Activated CD4-positive, alpha-beta T cell treated with anti-CD3 and anti-CD28 coated beads, Interleukin-2, amount 10 ng/mL, durations not matched to agents 7 days and 5 days (primary cell): ENCODE measurements at regions of chr6 and their contacts with region 1.

Region 1: DNA sequence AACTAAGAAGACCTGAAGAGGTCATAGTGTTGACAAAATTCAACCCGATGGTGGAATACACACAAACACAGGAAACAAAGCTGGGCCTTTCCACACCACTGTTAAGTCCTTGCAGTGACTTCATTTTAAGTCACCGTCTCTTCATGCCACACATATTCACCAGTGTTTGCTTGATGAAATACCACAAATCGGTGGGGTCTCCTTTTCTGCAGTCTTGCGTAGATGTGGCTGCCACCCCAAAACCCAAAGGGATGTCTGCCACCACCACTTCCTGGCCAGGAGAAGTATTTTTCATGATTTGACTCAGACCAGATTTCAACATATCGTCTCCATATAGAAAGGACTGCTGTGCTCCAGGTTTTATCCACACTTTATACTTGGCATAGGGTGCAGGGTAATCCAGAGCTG is 11.0 kb upstream of the COL10A1 start:
- DNase-seq: peak; percentile 22
- H3K4me3 Mint-ChIP-seq: no peak overlapping the region
- H3K27ac Mint-ChIP-seq: no peak overlapping the region
- H3K4me1 Mint-ChIP-seq: peaks cover 14% of the 10 kb centered on the region
- H3K27me3 Mint-ChIP-seq: no peaks in the 10 kb centered on the region

Region 2: DNA sequence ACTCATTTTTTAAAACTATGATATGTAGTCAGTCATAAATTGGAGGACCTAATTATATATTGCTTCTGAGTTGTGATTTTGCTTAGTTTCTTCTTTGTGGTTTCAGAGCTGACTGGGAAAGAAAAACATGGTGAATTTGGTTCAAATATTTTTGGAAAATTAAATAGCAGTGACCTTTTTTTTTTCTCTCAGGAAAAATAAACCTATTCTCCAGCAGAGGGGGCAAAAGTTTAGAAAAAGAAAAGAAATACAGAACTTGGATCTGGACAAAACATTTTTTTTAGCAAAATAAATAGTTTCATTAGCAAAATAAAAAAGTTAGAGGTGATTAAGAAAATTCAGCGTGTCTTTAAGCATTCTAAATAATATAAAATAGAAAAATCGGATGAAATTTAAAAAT is 21.2 kb before region 1 on chr6:
- CTCF ChIA-PET with region 1: interaction called, 10 read pairs
- POLR2A ChIA-PET with region 1: no interaction called
- DNase-seq: no peak
- H3K4me3 Mint-ChIP-seq: no peak overlapping the region
- H3K27ac Mint-ChIP-seq: no peak overlapping the region
- H3K4me1 Mint-ChIP-seq: peaks cover 2% of the 10 kb centered on the region
- H3K27me3 Mint-ChIP-seq: no peaks in the 10 kb centered on the region

Region 3: GRCh38 chr6:116152620-116153019 is 15.7 kb after region 1 on chr6:
- CTCF ChIA-PET with region 1: no interaction called
- POLR2A ChIA-PET with region 1: no interaction called
- DNase-seq: no peak
- H3K4me3 Mint-ChIP-seq: no peak overlapping the region
- H3K27ac Mint-ChIP-seq: no peak overlapping the region
- H3K4me1 Mint-ChIP-seq: no peaks in the 10 kb centered on the region
- H3K27me3 Mint-ChIP-seq: no peaks in the 10 kb centered on the region